ENCODE measurements at regions of chr2 and their contacts with region 1.

Region 1: GRCh38 chr2:101518578-101519492 is 43.9 kb upstream of the RFX8 start:
- DNase-seq: peak; percentile 28 to 55 (median 34)
- ATAC-seq: peak; percentile 80
- H3K4me3 ChIP-seq: no peak overlapping the region
- H3K27ac ChIP-seq: no peak overlapping the region
- H3K4me1 ChIP-seq: no peaks in the 10 kb centered on the region
- H3K27me3 ChIP-seq: peaks cover 2 to 36% of the 10 kb centered on the region in 2 experiments; a peak in 2 of 5 replicates
- CTCF ChIP-seq: peak; percentile 27 to 52 (median 35); a peak in 4 of 6 replicates
- EP300 ChIP-seq: no peak
- POLR2A ChIP-seq: no peak
- RAD21 ChIP-seq: peak; percentile 42 to 52

Region 2: DNA sequence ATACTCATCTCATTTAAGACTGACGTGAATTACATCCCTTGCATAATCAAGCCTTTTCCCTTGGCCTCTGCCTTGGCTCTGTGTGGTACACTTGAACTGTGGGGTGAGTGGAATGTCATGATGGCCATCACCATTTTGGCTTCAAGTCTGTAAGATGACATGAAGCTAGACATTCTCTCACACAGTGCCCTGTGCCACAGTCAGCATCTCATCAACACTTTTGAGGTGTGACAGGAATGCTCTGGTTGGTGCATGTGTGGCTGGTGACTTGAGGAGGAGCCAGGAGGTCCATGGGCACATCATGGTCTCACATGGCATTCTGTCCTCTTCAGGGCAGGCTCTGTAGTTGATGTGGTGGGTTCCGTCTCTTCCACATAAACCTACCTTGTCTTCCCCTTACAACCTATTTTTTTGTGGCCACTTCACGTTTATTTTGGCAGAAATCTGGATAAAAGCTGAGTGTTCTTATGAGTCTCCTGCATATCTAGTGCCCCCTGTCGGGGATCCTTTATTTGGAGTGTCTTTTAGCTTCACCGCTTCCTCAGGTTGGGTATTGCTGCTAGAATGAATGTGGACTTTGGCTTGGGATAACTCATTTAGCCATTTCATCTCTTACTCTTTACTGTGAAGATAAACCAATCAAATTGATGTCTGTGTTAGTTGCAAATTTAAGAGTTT is 206.8 kb after region 1 on chr2:
- CTCF ChIA-PET with region 1: no interaction called
- POLR2A ChIA-PET with region 1: no interaction called
- in situ Hi-C with region 1: no loop called
- intact Hi-C with region 1: loop called (anchors 10 kb)
- DNase-seq: peak; percentile 24 to 60 (median 27)
- ATAC-seq: peak; percentile 68
- H3K4me3 ChIP-seq: no peak overlapping the region
- H3K27ac ChIP-seq: no peak overlapping the region
- H3K4me1 ChIP-seq: peaks cover 0 to 4% of the 10 kb centered on the region in 2 experiments; a peak in 3 of 5 replicates
- H3K27me3 ChIP-seq: no peaks in the 10 kb centered on the region
- CTCF ChIP-seq: peak; percentile 43 to 65 (median 56)
- EP300 ChIP-seq: no peak
- POLR2A ChIP-seq: no peak
- RAD21 ChIP-seq: peak; percentile 40 to 62

Region 3: DNA sequence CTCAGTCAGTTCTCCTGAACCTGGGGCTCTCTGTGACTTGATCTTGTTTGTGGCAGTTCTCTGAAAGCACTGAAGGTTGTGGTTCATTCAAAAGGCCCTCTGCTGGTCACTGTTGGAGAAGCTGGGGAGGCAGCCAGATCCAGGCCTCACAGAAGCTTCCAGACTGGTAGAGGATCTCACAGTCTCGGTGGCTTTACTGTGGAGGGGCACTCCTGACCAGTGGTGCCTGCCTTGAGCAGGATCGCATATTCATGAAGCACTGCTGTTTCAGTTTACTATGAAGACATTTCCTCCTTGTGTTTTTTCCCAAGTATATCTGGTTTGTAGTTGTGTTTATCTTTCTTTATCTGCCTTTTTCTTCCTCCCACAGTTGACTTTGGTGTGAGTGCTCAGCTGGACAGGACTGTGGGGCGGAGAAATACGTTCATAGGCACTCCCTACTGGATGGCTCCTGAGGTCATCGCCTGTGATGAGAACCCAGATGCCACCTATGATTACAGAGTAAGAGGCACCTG is 312.6 kb after region 1 on chr2:
- CTCF ChIA-PET with region 1: no interaction called
- POLR2A ChIA-PET with region 1: no interaction called
- in situ Hi-C with region 1: no loop called
- intact Hi-C with region 1: loop called (anchors 5 kb)
- DNase-seq: peak; percentile 43 to 74 (median 54)
- ATAC-seq: peak; percentile 99
- H3K4me3 ChIP-seq: no peak overlapping the region
- H3K27ac ChIP-seq: no peak overlapping the region; the same call in 2 of the 3 replicates
- H3K4me1 ChIP-seq: peaks cover 0 to 31% of the 10 kb centered on the region in 2 experiments; a peak in 3 of 5 replicates
- H3K27me3 ChIP-seq: no peaks in the 10 kb centered on the region
- CTCF ChIP-seq: peak; percentile 76 to 81 (median 80)
- EP300 ChIP-seq: no peak
- POLR2A ChIP-seq: no peak
- RAD21 ChIP-seq: peak; percentile 66 to 72

Region 4: GRCh38 chr2:101983928-101984327 is 465.1 kb after region 1 on chr2:
- CTCF ChIA-PET with region 1: no interaction called
- POLR2A ChIA-PET with region 1: no interaction called
- in situ Hi-C with region 1: no loop called
- intact Hi-C with region 1: loop called (anchors 10 kb)
- DNase-seq: no peak
- ATAC-seq: 0 out of 3 replicates have a peak, but pooled peaks have one; percentile 43
- H3K4me3 ChIP-seq: no peak overlapping the region
- H3K27ac ChIP-seq: no peak overlapping the region
- H3K4me1 ChIP-seq: 0 out of 5 replicates have a peak, but pooled peaks cover 0 to 3% of the 10 kb centered on the region in 2 experiments
- H3K27me3 ChIP-seq: peaks cover 25 to 77% of the 10 kb centered on the region in 2 experiments; a peak in 4 of 5 replicates
- CTCF ChIP-seq: peak in 2 of 3 experiments; percentile 12 to 38; a peak in 1 of 6 replicates
- EP300 ChIP-seq: no peak
- POLR2A ChIP-seq: no peak
- RAD21 ChIP-seq: peak; percentile 25 to 50; a peak in 2 of 4 replicates

Measured in K562 (cell line).